A549 (cell line): ENCODE measurements at regions of chr5 and their contacts with region 1.

Region 1: GRCh38 chr5:72829707-72830106 is 13.2 kb downstream of the TNPO1 start:
- DNase-seq: no peak
- ATAC-seq: peak in 1 of 2 experiments; percentile 65; a peak in 3 of 6 replicates
- H3K4me3 ChIP-seq: no peak overlapping the region
- H3K27ac ChIP-seq: 0 out of 6 replicates have a peak overlapping the region, but pooled peaks of 1 of the 2 experiments have one; percentile 8
- H3K4me1 ChIP-seq: peaks cover 74% of the 10 kb centered on the region
- CTCF ChIP-seq: no peak
- EP300 ChIP-seq: no peak
- POLR2A ChIP-seq: no peak
- RAD21 ChIP-seq: no peak

Region 2: GRCh38 chr5:72842816-72843215 is 13.1 kb after region 1 on chr5:
- CTCF ChIA-PET with region 1: interaction called, 10 read pairs
- POLR2A ChIA-PET with region 1: no interaction called
- DNase-seq: peak; percentile 56 to 92
- ATAC-seq: peak; percentile 91 to 93
- H3K4me3 ChIP-seq: peak overlapping the region; percentile 13; the same call in 1 of the 3 replicates
- H3K27ac ChIP-seq: peak overlapping the region; percentile 86 to 95
- H3K4me1 ChIP-seq: peaks cover 95% of the 10 kb centered on the region
- CTCF ChIP-seq: peak; percentile 39
- EP300 ChIP-seq: no peak; a peak in 1 of 5 replicates
- POLR2A ChIP-seq: no peak
- RAD21 ChIP-seq: peak; percentile 66 to 67

Region 3: GRCh38 chr5:72988769-72989168 is 159.1 kb after region 1 on chr5:
- CTCF ChIA-PET with region 1: no interaction called
- POLR2A ChIA-PET with region 1: no interaction called
- DNase-seq: no peak
- ATAC-seq: no peak
- H3K4me3 ChIP-seq: no peak overlapping the region
- H3K27ac ChIP-seq: no peak overlapping the region
- H3K4me1 ChIP-seq: no peaks in the 10 kb centered on the region
- CTCF ChIP-seq: no peak
- EP300 ChIP-seq: no peak
- POLR2A ChIP-seq: no peak
- RAD21 ChIP-seq: no peak